Activated CD8-positive, alpha-beta T cell treated with anti-CD3 and anti-CD28 coated beads for 36 hours (primary cell): ENCODE measurements at regions of chr6 and their contacts with region 1.

Region 1: GRCh38 chr6:41735427-41736356 is at the start of gene TFEB:
- DNase-seq: peak; percentile 96
- ATAC-seq: peak; percentile 74
- H3K4me3 Mint-ChIP-seq: peak within 1 kb of the TSS; percentile 84
- H3K27ac Mint-ChIP-seq: no peak within 1 kb of the TSS
- H3K4me1 Mint-ChIP-seq: peaks cover 25% of the 10 kb centered on the region
- H3K27me3 Mint-ChIP-seq: no peaks in the 10 kb centered on the region
- CTCF ChIP-seq: peak; percentile 77
- total RNA-seq, gene TFEB: 14.6 to 15.9 TPM

Region 2: DNA sequence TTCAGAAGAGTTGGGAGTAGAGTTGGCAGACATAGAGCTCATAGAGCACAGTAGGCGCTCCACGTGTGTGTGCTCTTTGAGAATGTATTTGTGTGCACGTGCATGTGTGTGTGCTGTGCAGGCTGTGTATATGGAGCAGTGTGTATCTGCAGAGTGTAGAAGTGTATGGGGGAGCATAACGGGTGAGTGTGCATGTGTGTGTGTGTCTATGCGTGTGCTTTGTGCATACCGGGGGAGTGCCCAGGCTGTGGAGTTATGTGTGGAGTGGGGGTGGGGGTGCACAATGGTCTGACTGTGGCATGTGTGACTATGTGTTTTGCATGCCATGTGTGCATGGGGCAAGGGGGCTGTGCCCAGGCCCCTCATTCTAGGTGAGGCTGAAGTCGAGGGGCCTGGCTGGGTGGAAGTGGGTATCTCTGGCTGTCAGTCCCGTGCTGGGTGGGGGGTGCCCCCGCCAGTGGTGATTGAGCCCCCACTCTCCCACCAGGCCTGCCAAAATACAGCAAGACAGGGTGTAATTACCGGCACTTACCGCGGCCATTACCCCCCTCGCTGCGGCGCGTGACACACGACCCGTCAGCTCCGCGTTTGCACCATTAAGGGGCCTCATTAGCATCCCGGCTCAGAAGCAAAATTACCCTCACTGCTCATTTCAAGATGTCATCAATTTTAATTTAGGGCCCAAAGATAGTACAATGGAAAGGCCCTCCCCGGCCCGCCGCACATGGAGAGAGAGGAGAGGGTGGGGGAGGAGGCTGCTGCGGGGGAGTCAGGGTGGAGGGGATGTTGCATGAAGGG is 58.4 kb before region 1 on chr6:
- CTCF ChIA-PET with region 1: no interaction called
- POLR2A ChIA-PET with region 1: no interaction called
- intact Hi-C with region 1: no loop called
- DNase-seq: no peak
- ATAC-seq: no peak
- H3K4me3 Mint-ChIP-seq: no peak overlapping the region
- H3K27ac Mint-ChIP-seq: no peak overlapping the region
- H3K4me1 Mint-ChIP-seq: no peaks in the 10 kb centered on the region
- H3K27me3 Mint-ChIP-seq: peaks cover 3% of the 10 kb centered on the region
- CTCF ChIP-seq: no peak

Region 3: DNA sequence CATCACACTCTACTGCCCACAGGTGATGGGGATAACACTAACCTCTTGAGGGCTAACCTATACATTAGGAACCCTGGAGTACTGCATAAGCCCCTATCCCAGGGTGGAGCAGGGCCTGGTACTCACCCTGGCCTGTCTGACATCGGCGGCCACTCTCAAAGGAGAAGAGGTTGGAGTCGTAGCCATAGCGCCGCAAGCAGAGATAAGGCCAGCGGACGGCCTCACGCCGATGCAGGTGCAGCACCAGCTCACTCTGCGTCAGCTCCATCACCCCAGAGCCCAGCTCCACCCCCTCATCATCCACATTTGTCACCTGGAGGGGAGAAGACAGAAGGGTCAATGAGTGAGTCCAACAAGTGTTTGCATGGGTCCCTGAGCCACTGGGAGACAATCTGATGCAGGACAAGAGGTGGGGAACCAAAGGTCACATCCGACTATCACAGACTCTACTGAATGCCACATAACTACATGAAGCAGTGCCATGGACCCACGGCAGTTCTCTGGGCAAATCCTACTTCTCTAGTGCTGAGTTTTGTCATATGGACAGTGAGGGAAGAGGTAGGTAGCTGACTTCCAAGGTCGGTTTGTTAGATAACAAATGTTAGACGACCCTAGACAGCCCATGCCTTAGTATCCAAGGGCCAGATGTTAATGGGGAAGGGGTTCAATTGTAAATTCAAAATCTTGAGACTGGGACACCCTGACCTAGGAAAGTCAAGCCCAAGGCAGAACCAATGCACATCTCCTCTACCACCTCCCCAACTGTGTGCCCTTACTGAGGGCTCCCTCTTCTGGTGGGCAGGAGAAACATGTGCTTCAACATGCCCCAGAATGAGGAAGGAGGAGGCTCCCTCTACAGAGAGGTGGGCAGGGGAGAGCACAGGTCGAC is 39.8 kb after region 1 on chr6:
- CTCF ChIA-PET with region 1: interaction called, 11 read pairs
- POLR2A ChIA-PET with region 1: no interaction called
- intact Hi-C with region 1: no loop called
- DNase-seq: peak; percentile 51
- ATAC-seq: peak; percentile 41
- H3K4me3 Mint-ChIP-seq: no peak overlapping the region
- H3K27ac Mint-ChIP-seq: no peak overlapping the region
- H3K4me1 Mint-ChIP-seq: peaks cover 12% of the 10 kb centered on the region
- H3K27me3 Mint-ChIP-seq: no peaks in the 10 kb centered on the region
- CTCF ChIP-seq: peak; percentile 74